Endothelial cell of umbilical vein (primary cell): ENCODE measurements at regions of chr2 and their contacts with region 1.

Region 1: DNA sequence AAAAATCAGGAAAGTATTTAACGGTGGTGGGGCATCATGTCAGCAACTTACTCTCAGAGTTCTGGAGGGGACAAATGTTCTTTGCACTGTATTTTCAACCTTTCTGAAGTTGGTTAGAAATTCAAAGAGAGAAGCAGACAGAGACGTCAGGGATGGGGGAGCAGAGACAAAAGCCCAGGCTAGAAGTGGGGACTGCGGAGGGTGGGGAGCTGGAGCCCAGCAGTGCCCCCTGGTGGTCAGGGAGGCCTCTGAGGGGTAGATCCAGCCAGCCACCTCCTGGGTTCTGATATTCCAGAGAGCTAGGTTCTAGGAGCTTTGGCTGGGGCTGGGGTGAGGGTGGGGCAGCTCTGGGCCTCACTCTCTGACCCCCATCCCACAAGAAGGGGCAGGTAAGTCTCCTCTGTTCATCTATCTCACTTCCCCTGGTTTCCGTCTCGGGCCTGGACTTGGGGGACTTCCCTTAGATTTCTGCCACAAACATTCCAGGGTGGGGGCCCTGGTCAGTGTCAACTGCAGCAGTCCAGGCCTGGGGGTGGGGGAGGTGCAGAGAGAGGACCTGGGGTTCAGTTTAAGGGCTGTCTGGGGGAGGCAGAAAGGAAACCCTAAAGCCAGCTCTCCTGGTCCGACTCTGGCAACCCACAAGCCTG is 8.9 kb downstream of the TNS1 start:
- DNase-seq: peak; percentile 54
- H3K4me3 ChIP-seq: peak overlapping the region in 1 of 3 experiments; percentile 59
- H3K27ac ChIP-seq: peak overlapping the region; percentile 74
- H3K4me1 ChIP-seq: peaks cover 33% of the 10 kb centered on the region
- H3K27me3 ChIP-seq: no peaks in the 10 kb centered on the region
- CTCF ChIP-seq: peak; percentile 80 to 96
- POLR2A ChIP-seq: no peak

Region 2: GRCh38 chr2:217886720-217887309 is 107.1 kb before region 1 on chr2:
- CTCF ChIA-PET with region 1: interaction called, 60 read pairs
- POLR2A ChIA-PET with region 1: no interaction called
- dilution Hi-C with region 1: no loop called
- intact Hi-C with region 1: loop called (anchors 1 kb)
- DNase-seq: peak; percentile 71
- H3K4me3 ChIP-seq: no peak overlapping the region
- H3K27ac ChIP-seq: no peak overlapping the region
- H3K4me1 ChIP-seq: peaks cover 17% of the 10 kb centered on the region
- H3K27me3 ChIP-seq: no peaks in the 10 kb centered on the region
- CTCF ChIP-seq: peak; percentile 78 to 80
- POLR2A ChIP-seq: no peak

Region 3: DNA sequence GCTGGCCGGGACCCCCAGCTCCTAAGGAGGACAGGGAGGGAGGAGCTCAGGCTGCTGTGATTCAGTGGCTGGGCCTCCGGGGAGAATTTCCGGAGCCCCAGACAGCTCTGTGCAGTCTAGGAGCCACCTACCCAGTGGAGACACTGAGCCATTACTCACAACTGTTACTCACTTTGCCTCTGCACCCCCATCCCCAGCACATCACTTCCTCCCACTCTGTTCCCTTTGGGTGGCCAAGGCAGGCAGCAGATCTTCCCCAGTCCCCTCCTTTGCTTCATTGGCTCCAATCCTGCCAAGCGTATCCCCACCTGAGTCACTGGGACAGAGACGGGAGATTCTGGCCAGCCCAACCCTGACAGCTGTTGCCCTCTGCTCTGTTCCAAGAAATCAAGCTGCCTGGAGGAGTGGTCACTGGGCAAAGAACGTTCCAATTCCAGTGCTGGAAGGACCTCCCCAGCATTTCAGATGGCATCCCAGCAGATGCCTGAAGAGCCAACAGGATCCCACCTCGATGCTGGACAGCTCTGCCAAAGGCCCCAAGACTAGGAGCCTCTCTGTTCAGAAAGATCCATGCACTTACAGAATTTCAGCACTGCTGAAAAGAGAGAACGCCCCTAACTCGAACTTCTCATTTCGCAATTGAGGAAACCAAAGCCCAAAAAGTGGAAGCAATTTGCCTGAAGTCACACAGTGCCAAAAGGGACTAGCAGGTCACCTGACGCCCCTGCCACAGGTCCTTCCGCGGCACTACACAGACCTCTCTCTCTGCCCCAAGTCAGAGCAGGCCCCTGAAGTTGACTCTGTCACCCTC is 59.4 kb before region 1 on chr2:
- CTCF ChIA-PET with region 1: interaction called, 40 read pairs
- POLR2A ChIA-PET with region 1: no interaction called
- dilution Hi-C with region 1: no loop called
- intact Hi-C with region 1: loop called (anchors 1 kb)
- DNase-seq: peak; percentile 53
- H3K4me3 ChIP-seq: no peak overlapping the region
- H3K27ac ChIP-seq: peak overlapping the region; percentile 81
- H3K4me1 ChIP-seq: peaks cover 45% of the 10 kb centered on the region
- H3K27me3 ChIP-seq: no peaks in the 10 kb centered on the region
- CTCF ChIP-seq: no peak
- POLR2A ChIP-seq: no peak

Region 4: DNA sequence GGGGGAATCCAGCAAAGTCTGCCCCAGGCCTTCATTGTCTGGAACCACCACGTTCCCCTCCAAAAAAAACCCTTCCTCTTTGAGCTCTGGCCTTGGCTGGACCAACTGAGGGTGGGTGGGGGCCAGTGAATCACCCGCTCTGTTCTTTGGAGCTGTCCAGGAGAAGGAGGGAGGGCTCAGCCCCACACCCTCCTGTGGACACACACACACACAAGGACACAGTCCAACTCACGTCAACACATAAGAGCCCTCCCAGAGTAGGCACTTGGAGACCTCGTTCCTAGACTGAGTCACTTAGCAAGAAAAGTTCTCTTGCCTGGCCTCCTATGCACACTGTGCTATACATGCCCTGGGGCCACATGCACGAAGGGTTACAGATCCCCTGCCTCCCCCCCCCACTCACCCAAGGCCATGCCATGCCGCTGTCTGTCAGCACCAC is 10.1 kb after region 1 on chr2:
- CTCF ChIA-PET with region 1: interaction called, 46 read pairs
- POLR2A ChIA-PET with region 1: no interaction called
- dilution Hi-C with region 1: no loop called
- intact Hi-C with region 1: no loop called
- DNase-seq: no peak
- H3K4me3 ChIP-seq: no peak overlapping the region
- H3K27ac ChIP-seq: no peak overlapping the region
- H3K4me1 ChIP-seq: peaks cover 11% of the 10 kb centered on the region
- H3K27me3 ChIP-seq: no peaks in the 10 kb centered on the region
- CTCF ChIP-seq: no peak
- POLR2A ChIP-seq: no peak

Region 5: DNA sequence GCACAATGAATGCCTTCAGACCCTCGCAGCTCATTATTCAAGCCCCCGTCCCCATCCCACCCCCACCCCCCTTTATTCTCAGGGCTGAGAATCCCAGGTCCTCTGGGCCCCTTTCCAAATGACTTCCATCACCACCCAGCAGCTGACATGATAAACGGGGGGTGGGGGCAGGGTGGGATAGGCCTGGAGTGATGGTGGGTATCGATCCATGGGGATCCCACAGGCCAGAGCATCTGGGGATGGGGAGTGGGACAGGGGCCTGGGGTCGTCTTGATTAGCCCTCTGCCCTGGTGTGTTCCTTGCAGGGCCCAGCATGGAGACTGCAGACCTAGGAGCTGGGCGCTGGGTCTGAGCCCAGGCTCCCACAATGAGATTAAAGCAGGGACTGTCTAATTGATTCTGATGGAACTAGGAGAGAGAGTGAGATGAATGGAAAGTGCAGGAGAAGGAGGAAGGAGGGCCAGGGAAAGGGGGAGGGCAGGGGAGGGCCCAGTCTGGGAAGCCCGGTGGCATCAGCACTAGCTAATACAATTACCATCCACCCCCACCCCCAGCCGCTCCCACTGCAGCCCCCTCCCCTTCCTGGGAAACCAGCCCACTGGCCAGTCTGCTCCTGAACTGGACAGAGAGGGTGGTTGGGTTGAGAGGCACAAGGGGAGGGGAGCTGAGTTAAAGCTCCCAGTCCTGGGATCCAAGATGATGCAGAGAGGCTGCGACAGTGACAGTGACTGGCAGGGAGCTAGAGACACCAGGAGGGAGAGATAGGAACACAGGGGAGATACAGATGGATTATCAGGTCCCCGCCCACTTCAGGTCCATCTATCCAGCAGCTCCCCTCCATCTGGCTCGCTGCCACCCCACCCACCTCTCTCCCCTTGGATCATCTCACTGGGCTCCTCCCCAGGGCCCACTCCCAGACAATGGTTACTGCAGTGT is 21.9 kb after region 1 on chr2:
- CTCF ChIA-PET with region 1: interaction called, 13 read pairs
- POLR2A ChIA-PET with region 1: no interaction called
- dilution Hi-C with region 1: no loop called
- intact Hi-C with region 1: no loop called
- DNase-seq: no peak
- H3K4me3 ChIP-seq: no peak overlapping the region
- H3K27ac ChIP-seq: no peak overlapping the region
- H3K4me1 ChIP-seq: peaks cover 7% of the 10 kb centered on the region
- H3K27me3 ChIP-seq: no peaks in the 10 kb centered on the region
- CTCF ChIP-seq: no peak
- POLR2A ChIP-seq: no peak

Region 6: DNA sequence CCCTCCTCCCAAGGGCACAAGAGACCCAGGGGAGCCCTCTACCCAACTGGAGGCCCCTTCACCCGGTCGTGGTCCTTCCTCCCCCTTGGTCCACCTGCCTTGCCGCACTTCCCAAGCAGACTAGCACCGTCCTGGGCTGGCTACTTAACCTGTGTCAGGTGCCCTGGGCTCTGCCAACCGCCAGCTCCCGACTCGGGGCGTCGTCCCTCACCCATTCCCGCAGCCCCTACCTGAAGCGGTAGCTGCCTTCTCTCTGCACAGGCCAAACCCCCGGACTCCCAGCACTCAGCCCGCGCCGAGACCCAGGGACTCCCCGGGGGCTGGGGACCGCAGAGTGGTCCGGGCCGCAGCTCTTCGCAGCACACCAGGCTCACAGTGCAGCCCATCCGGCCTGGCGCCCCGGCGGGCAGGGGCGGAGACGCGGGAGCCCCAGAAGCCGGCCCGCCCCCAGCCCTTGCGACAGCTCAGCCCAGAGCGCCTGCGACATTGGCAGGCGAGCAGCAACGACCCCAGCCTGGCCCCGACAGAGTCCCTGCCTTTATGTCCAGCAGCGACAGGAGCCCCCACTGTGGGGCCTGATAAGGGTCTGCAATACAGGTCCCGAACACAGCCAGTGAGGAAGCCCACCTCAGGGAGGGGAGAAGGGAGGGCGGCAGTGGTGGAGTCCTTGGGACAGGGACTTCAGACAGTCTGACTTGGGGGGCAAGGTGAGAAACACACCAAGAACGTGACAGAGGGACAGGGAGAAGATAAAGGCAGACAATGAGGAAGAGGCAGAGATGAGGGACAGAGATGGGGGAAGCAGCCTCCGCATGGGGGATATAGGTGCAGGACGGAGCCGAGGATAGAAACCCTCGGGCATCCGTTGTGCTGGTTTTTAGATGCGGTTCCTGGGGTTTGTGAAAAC is 39.9 kb after region 1 on chr2:
- CTCF ChIA-PET with region 1: interaction called, 35 read pairs
- POLR2A ChIA-PET with region 1: no interaction called
- dilution Hi-C with region 1: no loop called
- intact Hi-C with region 1: loop called (anchors 1 kb)
- DNase-seq: no peak
- H3K4me3 ChIP-seq: no peak overlapping the region
- H3K27ac ChIP-seq: no peak overlapping the region
- H3K4me1 ChIP-seq: no peaks in the 10 kb centered on the region
- H3K27me3 ChIP-seq: peaks cover 26 to 27% of the 10 kb centered on the region in 2 experiments
- CTCF ChIP-seq: no peak
- POLR2A ChIP-seq: no peak

Region 7: DNA sequence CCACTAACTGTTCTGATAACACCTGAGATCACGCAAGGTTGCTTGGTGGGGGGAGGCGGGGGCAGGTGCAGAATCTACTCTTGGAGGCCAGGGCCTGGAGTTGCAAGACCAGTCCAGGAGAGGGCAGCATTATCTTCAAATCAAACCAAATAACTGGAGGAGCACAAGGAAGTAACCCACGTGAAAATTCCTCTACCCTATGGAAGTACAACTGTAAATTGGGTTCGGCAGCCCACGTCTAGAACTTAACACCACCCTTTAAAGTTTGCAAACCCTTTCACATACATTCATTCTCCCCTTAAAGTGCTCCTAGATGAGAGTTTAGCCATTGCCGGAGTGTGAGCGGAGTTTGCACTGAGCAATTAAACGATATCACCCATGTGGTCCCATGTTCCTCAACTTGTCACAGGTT is 192.4 kb after region 1 on chr2:
- CTCF ChIA-PET with region 1: no interaction called
- POLR2A ChIA-PET with region 1: no interaction called
- dilution Hi-C with region 1: no loop called
- intact Hi-C with region 1: no loop called
- DNase-seq: peak; percentile 73
- H3K4me3 ChIP-seq: no peak overlapping the region
- H3K27ac ChIP-seq: no peak overlapping the region
- H3K4me1 ChIP-seq: no peaks in the 10 kb centered on the region
- H3K27me3 ChIP-seq: peaks cover 3 to 10% of the 10 kb centered on the region in 2 experiments
- CTCF ChIP-seq: peak; percentile 76 to 77
- POLR2A ChIP-seq: no peak